Activated T-helper 2 cell treated with anti-CD3 and anti-CD28 coated beads, Interferon-gamma antibody, Interleukin-2, Interleukin-4, amounts not matched to agents 10 μg/mL and 5 μg/mL and 100 μg/mL, durations not matched to agents 14 hours and 24 hours and 36 hours (primary cell): ENCODE measurements at regions of chr2 and their contacts with region 1.

Region 1: GRCh38 chr2:101998896-101999789 is 7.4 kb downstream of the IL1R2 start:
- DNase-seq: no peak
- H3K4me3 Mint-ChIP-seq: no peak overlapping the region
- H3K27ac Mint-ChIP-seq: peak overlapping the region; percentile 68
- H3K4me1 Mint-ChIP-seq: peaks cover 26% of the 10 kb centered on the region
- H3K27me3 Mint-ChIP-seq: no peaks in the 10 kb centered on the region

Region 2: DNA sequence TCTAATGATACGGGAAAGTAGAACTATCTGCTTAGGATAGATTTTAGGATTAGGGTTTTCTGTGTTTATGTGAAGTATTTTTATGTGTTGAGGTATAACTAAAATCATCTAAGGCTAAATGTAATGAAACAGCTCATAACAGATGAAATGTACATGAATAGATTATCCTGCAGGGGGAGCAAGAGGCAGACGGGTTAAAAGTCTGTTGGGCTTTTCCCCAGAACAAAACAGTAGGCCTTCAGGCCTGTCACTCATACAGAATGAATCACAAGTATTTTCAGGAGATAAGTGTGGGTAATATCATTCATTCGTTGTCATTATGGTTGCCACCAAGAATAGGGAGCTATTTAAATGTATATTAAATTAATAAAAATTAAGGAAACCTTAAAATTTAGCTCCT is 115.3 kb before region 1 on chr2:
- intact Hi-C with region 1: loop called (anchors 5 kb)
- DNase-seq: no peak
- H3K4me3 Mint-ChIP-seq: no peak overlapping the region
- H3K27ac Mint-ChIP-seq: peak overlapping the region; percentile 24
- H3K4me1 Mint-ChIP-seq: peaks cover 11% of the 10 kb centered on the region
- H3K27me3 Mint-ChIP-seq: no peaks in the 10 kb centered on the region

Region 3: GRCh38 chr2:101900375-101900774 is 98.8 kb before region 1 on chr2:
- intact Hi-C with region 1: loop called (anchors 2 kb)
- DNase-seq: no peak
- H3K4me3 Mint-ChIP-seq: no peak overlapping the region
- H3K27ac Mint-ChIP-seq: no peak overlapping the region
- H3K4me1 Mint-ChIP-seq: peaks cover 11% of the 10 kb centered on the region
- H3K27me3 Mint-ChIP-seq: no peaks in the 10 kb centered on the region

Region 4: DNA sequence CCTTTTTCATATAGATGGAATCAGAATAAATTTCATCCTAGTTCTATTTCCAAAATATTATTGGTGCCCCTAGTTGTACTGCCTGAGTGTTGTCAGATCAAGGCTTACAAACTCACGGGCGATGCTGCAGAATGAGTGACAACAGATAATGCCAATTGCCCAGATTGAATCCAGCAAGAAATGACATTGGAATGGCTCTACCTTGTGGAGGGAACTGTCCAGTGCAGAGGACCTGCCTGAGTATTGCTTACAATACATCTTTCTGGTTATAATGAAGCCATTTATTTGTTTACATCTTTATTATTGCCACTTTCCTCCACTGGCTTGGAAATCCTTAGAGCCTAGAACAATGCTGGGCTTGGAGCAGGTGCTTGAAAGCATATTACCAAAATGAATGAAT is 15.2 kb before region 1 on chr2:
- intact Hi-C with region 1: no loop called
- DNase-seq: no peak
- H3K4me3 Mint-ChIP-seq: no peak overlapping the region
- H3K27ac Mint-ChIP-seq: no peak overlapping the region
- H3K4me1 Mint-ChIP-seq: peaks cover 7% of the 10 kb centered on the region
- H3K27me3 Mint-ChIP-seq: peaks cover 2% of the 10 kb centered on the region

Region 5: GRCh38 chr2:102103992-102104871 is 105.1 kb after region 1 on chr2:
- intact Hi-C with region 1: loop called (anchors 5 kb)
- DNase-seq: no peak
- H3K4me3 Mint-ChIP-seq: peak overlapping the region; percentile 67
- H3K27ac Mint-ChIP-seq: no peak overlapping the region
- H3K4me1 Mint-ChIP-seq: peaks cover 25% of the 10 kb centered on the region
- H3K27me3 Mint-ChIP-seq: peaks cover 50% of the 10 kb centered on the region

Region 6: GRCh38 chr2:102235491-102235890 is 236.3 kb after region 1 on chr2:
- intact Hi-C with region 1: loop called (anchors 2 kb)
- DNase-seq: no peak
- H3K4me3 Mint-ChIP-seq: no peak overlapping the region
- H3K27ac Mint-ChIP-seq: no peak overlapping the region
- H3K4me1 Mint-ChIP-seq: peaks cover 48% of the 10 kb centered on the region
- H3K27me3 Mint-ChIP-seq: peaks cover 2% of the 10 kb centered on the region

Region 7: DNA sequence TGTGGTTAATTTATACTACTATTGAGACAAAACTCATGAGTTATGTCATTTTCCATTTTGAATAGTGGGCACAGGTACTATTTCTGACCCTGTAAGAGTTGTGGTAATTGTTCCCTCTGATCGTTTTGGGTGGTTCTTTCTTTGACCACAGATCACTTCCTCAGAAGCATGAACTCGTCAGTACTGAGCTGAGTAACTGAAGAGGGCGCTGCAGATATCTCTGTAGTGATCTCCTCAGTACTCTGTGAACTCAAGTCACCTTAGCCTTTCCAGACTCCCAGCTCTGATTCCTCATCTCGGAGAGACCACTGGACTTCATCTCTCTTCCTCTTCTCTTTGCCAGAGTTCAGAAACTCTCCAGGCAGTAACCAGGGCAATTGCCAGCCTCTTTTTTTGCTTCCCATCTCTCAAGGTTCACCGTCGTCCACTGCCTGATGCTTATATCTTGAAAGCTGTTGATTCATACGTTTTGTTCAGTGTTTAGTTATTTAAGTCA is 302.8 kb after region 1 on chr2:
- intact Hi-C with region 1: loop called (anchors 5 kb)
- DNase-seq: peak; percentile 55
- H3K4me3 Mint-ChIP-seq: peak overlapping the region; percentile 59
- H3K27ac Mint-ChIP-seq: peak overlapping the region; percentile 96
- H3K4me1 Mint-ChIP-seq: peaks cover 76% of the 10 kb centered on the region
- H3K27me3 Mint-ChIP-seq: no peaks in the 10 kb centered on the region